ENCODE measurements at regions of chr21 and their contacts with region 1.

Region 1: GRCh38 chr21:36156339-36156814 is 247 bp upstream of the DOP1B start:
- DNase-seq: peak; percentile 97
- H3K4me3 ChIP-seq: peak overlapping the region; percentile 79
- H3K27ac ChIP-seq: no peak overlapping the region
- H3K4me1 ChIP-seq: peaks cover 9% of the 10 kb centered on the region
- CTCF ChIP-seq: no peak

Region 2: DNA sequence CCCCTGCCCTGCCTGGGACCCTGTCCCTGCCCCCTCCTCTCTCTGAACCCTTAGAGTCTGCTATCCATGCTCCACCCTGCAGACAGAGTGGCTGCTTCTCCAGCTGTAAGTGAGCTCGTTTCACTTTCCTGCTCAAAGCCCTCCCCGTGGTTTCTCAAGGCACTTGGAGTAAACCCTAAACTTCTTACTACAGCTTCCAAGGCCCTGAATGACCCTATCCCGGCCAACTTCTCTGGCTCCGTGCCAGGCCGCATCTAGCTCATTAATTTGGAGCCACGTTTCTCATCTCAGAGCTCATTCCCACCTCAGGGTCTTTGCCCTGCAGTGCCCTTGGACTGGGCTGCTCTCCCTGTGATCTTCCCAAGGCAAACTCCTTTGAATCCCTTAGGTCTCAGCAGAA is 872.2 kb before region 1 on chr21:
- CTCF ChIA-PET with region 1: no interaction called
- POLR2A ChIA-PET with region 1: no interaction called
- intact Hi-C with region 1: no loop called
- DNase-seq: no peak
- H3K4me3 ChIP-seq: no peak overlapping the region
- H3K27ac ChIP-seq: no peak overlapping the region
- H3K4me1 ChIP-seq: no peaks in the 10 kb centered on the region
- CTCF ChIP-seq: no peak

Region 3: GRCh38 chr21:36209626-36210171 is 53.3 kb after region 1 on chr21:
- CTCF ChIA-PET with region 1: no interaction called
- POLR2A ChIA-PET with region 1: no interaction called
- intact Hi-C with region 1: loop called (anchors 1 kb)
- DNase-seq: peak; percentile 74
- H3K4me3 ChIP-seq: no peak overlapping the region
- H3K27ac ChIP-seq: no peak overlapping the region
- H3K4me1 ChIP-seq: no peaks in the 10 kb centered on the region
- CTCF ChIP-seq: peak; percentile 79

Region 4: DNA sequence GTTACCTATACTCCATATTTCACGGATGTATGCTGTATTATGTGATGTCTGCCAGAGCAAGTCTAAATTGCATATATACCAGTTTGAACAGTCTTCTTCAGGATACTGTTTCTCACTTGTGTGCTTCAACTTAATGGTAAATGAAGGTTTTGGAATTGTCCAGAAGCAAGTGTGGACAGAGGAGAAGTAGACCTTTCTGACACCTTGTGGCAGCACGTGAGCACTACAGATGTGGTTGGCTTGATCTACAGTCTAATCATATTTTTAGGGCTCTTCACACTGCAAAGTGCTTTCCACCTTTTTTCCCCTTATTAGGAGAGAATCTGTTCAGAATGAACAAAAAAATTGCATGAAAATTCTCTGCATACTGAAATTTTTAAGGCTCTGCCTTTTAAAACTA is 174.5 kb after region 1 on chr21:
- CTCF ChIA-PET with region 1: no interaction called
- POLR2A ChIA-PET with region 1: no interaction called
- intact Hi-C with region 1: loop called (anchors 1 kb)
- DNase-seq: peak; percentile 76
- H3K4me3 ChIP-seq: no peak overlapping the region
- H3K27ac ChIP-seq: peak overlapping the region; percentile 4
- H3K4me1 ChIP-seq: peaks cover 25% of the 10 kb centered on the region
- CTCF ChIP-seq: peak; percentile 94

Measured in OCI-LY7 (cell line).